MCF 10A (cell line): ENCODE measurements at regions of chr19 and their contacts with region 1.

Region 1: DNA sequence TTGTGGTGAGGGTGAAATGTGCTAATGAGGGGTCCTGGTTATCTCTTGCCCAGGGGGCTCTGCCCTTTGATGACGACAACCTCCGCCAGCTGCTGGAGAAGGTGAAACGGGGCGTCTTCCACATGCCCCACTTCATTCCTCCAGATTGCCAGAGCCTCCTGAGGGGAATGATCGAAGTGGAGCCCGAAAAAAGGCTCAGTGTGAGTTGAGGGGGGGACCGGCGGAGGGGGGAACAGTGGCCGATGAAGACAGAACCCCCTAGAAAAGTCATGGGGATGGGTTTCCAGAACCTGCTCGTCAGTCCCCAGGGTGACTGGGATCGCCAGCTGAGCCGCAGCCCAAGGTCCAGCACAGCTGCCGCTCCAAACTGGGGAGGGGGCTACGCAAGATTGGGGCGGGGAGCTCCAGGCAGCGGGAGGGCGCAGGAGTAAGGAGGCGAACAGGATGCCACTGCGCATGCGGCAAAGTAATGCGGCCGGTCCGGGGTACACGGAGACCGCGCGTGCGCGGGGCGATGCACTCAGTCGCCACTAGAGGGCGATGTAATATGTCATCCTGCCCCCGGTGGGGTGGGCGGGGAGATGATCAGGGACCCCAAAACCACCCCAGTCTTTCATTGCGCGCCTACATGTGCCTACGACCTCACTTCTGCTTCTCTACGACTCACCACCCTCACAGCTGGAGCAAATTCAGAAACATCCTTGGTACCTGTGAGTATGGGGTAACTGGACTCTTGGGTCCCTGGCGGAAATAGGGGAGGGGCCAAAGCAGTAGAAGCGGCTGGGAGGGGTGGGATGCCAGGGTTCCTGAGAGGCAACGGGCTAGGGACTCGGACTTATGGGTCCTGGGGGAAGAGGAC is 17.9 kb downstream of the BRSK1 start:
- DNase-seq: peak; percentile 81
- H3K4me3 Mint-ChIP-seq: peak overlapping the region; percentile 58
- H3K27ac Mint-ChIP-seq: no peak overlapping the region
- H3K4me1 Mint-ChIP-seq: no peaks in the 10 kb centered on the region
- H3K27me3 Mint-ChIP-seq: no peaks in the 10 kb centered on the region
- CTCF ChIP-seq: peak; percentile 96

Region 2: DNA sequence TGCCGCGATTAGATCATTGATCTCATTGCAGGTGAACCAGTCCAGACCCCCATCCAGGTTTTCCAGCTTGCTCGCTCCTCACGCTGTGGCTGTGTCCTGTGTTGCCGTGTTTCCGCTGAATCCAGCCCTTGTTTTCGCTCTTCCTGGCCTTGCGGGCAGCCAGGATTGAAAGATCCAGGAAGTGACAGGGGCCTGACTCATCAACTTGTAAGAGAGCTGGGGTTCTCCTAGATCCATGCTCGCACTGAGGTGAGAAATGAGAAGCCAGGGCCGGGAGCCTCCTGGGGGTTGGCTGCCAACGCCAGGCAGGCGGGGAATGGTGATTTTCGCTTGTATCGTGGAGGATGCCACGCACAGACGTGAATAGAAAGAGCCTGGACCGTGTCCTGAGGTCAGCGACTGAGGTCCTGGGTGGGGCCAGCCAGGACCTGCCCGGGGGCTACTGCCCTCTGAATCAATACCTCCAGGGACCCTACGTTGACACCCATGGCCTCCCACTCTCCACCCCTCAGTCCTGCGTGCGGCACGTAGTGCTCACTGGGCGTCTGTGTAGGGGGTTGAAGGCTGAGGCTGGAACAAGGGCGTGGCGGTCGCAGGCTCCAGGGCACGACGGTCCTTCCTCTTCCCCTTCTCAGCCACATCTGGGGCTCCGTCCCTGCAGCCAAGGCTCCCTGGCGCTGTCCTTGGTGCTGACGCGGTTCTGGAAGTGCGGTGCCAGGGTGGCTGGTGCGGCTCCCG is 85.1 kb before region 1 on chr19:
- CTCF ChIA-PET with region 1: no interaction called
- POLR2A ChIA-PET with region 1: no interaction called
- intact Hi-C with region 1: no loop called
- DNase-seq: peak; percentile 99
- H3K4me3 Mint-ChIP-seq: peak overlapping the region; percentile 78
- H3K27ac Mint-ChIP-seq: peak overlapping the region; percentile 64
- H3K4me1 Mint-ChIP-seq: peaks cover 16% of the 10 kb centered on the region
- H3K27me3 Mint-ChIP-seq: no peaks in the 10 kb centered on the region
- CTCF ChIP-seq: no peak

Region 3: DNA sequence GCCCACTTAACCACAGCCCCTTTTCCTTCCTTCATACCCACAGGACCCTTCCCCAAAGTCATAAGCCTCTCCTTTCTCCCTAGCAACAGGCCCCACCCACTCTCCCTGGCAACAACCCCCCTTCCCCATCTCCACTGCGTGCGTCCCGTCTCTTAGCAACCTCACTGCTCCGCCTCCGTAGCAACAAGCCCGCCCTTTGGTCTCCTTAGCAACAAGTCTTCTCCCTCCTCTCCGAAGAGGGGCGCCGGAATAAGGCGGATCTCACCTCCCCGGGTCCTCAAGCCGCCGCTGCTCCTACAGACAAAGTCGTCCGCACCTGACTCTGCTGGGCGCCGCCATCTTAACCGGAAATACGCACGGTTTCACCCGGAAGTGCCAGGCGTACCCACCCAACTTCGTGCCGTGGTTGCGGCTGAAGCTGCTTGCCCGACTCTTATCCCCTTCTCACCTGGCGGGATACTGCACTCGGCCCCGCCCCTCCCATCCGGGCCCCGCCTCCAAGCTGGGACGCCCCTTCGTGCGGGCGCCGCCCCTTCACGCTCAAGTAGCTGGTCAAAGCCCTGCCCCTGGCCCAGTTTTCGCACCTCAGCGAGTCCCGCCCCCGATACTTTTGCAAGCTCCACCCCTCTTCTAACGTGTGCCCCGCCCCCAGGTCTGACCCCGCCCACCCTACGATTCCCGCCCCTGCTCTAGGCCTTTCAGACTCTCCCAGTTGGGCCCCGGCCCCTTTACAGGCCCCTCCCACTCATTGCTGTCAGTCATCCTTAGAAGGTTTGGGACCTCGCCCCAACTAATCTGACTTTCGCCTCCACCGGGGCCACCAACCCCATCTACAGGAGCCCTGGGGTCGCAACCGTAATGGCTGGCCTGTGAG is 21.7 kb before region 1 on chr19 and contains the start of gene HSPBP1:
- CTCF ChIA-PET with region 1: interaction called, 15 read pairs
- POLR2A ChIA-PET with region 1: no interaction called
- intact Hi-C with region 1: no loop called
- DNase-seq: peak; percentile 98
- H3K4me3 Mint-ChIP-seq: peak within 1 kb of the TSS; percentile 96
- H3K27ac Mint-ChIP-seq: peak within 1 kb of the TSS; percentile 100
- H3K4me1 Mint-ChIP-seq: peaks cover 34% of the 10 kb centered on the region
- H3K27me3 Mint-ChIP-seq: peaks cover 12% of the 10 kb centered on the region
- CTCF ChIP-seq: no peak
- total RNA-seq, gene HSPBP1: 49.2 and 53.1 TPM in 2 replicates

Region 4: DNA sequence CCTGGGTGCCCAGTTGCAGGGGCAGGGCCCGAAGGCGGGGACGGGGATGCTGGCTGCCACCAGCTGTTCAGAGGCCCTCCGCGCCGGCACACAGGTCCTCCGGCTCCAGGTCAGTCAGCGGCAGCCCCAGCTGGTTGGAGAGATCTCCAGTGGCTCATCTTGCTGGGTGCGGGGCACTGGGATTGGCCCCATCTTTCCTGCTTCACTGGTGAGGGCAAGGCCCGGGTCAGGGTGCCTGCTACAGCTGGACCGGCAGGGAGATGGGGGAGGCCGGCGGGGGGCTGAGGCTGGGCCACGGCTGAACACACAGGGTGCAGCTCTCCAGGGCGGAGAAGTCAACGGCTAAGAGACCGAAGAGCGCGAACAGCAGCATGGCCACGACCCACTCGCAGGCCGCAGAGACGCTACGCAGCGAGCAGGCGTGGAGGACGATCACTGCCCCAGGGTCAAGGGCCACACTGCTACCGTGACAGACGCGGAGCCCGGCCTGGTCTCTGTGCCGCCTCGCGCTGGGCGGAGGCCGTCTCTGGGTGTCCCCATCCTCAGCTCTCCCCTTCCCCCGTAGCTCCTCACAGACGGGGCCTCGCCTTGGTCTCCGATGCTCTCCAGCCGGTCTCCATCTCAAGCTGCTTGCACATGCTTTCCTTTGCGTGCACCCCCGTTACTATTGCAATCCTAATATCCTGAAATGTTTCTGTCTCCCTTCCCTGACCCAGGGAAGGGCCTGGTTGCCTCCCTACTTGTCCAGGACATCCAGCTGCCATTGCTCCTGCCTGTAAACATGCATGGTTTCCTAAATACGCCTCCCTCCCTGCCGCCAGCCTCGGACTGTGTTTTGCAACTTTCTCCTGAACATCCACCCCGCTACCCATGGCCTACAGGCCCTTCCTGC is 11.2 kb after region 1 on chr19:
- CTCF ChIA-PET with region 1: interaction called, 58 read pairs
- POLR2A ChIA-PET with region 1: interaction called, 3 read pairs
- intact Hi-C with region 1: no loop called
- DNase-seq: no peak
- H3K4me3 Mint-ChIP-seq: no peak overlapping the region
- H3K27ac Mint-ChIP-seq: no peak overlapping the region
- H3K4me1 Mint-ChIP-seq: no peaks in the 10 kb centered on the region
- H3K27me3 Mint-ChIP-seq: no peaks in the 10 kb centered on the region
- CTCF ChIP-seq: no peak

Region 5: DNA sequence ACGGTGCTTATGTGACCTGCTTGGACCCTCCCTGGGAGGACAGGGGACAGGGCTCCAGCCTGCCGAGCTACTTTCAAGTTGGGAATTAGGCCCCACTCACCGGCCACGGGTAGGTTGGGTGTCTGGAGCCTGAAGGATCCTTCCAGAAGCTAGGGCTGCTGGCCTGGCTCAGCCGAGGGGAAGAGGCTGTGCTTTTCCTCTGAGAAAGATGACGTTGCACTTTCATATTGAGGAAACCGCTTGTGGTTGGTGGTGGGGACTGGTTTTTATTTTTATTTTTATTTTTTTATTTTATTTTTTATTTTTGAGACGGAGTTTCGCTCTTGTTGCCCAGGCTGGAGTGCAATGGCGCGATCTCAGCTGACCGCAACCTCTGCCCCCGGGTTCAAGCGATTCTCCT is 23.5 kb after region 1 on chr19 and contains the start of gene TMEM150B:
- CTCF ChIA-PET with region 1: interaction called, 58 read pairs
- POLR2A ChIA-PET with region 1: interaction called, 4 read pairs
- intact Hi-C with region 1: no loop called
- DNase-seq: no peak
- H3K4me3 Mint-ChIP-seq: no peak within 1 kb of the TSS
- H3K27ac Mint-ChIP-seq: no peak within 1 kb of the TSS
- H3K4me1 Mint-ChIP-seq: peaks cover 12% of the 10 kb centered on the region
- H3K27me3 Mint-ChIP-seq: peaks cover 27% of the 10 kb centered on the region
- CTCF ChIP-seq: no peak
- total RNA-seq, gene TMEM150B: not detected in 2 replicates

Region 6: GRCh38 chr19:55391702-55392615 is 90.3 kb after region 1 on chr19:
- CTCF ChIA-PET with region 1: interaction called, 21 read pairs
- POLR2A ChIA-PET with region 1: interaction called, 4 read pairs
- intact Hi-C with region 1: no loop called
- DNase-seq: peak; percentile 74
- H3K4me3 Mint-ChIP-seq: no peak overlapping the region
- H3K27ac Mint-ChIP-seq: no peak overlapping the region
- H3K4me1 Mint-ChIP-seq: peaks cover 21% of the 10 kb centered on the region
- H3K27me3 Mint-ChIP-seq: no peaks in the 10 kb centered on the region
- CTCF ChIP-seq: no peak